ENCODE measurements at regions of chr3 and their contacts with region 1.

Region 1: GRCh38 chr3:94069194-94069813 is 6.4 kb downstream of the NSUN3 start:
- DNase-seq: peak; percentile 42
- H3K4me3 ChIP-seq: no peak overlapping the region
- H3K27ac ChIP-seq: no peak overlapping the region
- H3K4me1 ChIP-seq: peaks cover 7% of the 10 kb centered on the region
- H3K27me3 ChIP-seq: no peaks in the 10 kb centered on the region
- CTCF ChIP-seq: peak; percentile 67

Region 2: DNA sequence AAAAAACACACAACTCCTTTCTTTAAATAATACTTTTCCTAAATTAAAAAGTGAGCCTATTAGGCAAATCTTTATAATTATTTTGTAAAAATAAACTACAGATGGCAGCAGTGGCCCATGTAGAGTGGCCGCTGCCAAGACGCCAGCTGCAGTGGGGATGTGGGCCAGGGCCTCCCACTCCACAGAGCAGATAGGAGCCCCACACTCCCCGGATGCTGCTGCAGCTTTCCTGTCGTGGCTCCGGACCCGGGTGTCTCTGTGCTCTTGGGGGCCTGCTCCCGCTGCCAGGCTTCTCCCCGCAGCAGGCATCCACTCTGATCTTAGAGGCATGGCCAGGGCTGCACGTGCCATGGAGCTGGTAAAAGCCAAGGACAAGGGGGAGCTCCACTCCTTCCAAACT is 163.1 kb before region 1 on chr3:
- CTCF ChIA-PET with region 1: interaction called, 8 read pairs
- POLR2A ChIA-PET with region 1: no interaction called
- intact Hi-C with region 1: loop called (anchors 5 kb)
- DNase-seq: peak; percentile 13
- H3K4me3 ChIP-seq: no peak overlapping the region
- H3K27ac ChIP-seq: no peak overlapping the region
- H3K4me1 ChIP-seq: no peaks in the 10 kb centered on the region
- H3K27me3 ChIP-seq: no peaks in the 10 kb centered on the region
- CTCF ChIP-seq: peak; percentile 27; the same call in 1 of the 2 replicates